ENCODE measurements at regions of chr4 and their contacts with region 1.

Region 1: DNA sequence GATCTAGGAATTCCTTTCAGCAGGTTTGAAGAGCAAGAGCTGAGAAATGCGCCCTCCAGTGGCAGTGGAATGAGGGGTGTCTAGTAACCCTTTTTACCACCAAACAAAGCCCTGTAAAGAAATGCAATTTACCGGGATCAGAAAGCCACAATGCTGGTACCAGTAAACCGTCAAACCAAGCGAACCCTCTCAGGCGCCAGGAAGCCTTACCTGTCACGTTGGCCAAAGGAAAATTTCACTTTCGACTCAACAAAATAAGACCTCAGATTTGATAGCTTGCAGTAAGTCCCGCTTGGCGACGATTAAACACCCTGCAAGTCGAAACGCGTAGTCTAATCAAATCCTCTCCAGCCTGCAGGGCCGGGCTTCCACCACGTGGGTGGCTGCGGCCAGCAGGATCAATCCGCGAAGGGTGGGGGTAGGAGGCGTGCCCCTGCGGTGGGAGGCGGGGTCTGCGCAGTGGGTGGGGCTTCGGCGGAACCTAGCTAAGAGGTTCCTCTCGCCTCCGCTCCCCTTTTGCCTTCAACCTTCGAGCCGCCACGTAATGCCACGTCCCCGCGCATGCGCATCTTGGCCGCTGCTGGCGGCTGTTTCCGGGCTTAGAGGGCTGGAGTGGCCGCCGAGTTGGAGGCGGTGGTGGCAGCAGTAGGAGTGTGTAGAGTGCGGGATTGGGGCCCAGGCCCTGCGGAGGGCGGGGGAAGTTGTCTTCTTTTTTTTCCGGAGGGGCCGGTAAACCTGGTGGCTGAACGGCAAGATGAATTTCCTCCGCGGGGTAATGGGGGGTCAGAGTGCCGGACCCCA is at the start of gene USO1:
- DNase-seq: peak; percentile 92
- H3K4me3 ChIP-seq: peak within 1 kb of the TSS; percentile 91
- H3K27me3 ChIP-seq: no peaks in the 10 kb centered on the region
- CTCF ChIP-seq: peak; percentile 79
- polyA plus RNA-seq, gene USO1: 41.3 and 90.3 TPM in 2 replicates

Region 2: GRCh38 chr4:75653845-75654503 is 70.3 kb before region 1 on chr4:
- CTCF ChIA-PET with region 1: interaction called, 16 read pairs
- POLR2A ChIA-PET with region 1: no interaction called
- DNase-seq: no peak
- H3K4me3 ChIP-seq: no peak overlapping the region
- H3K27me3 ChIP-seq: no peaks in the 10 kb centered on the region
- CTCF ChIP-seq: peak; percentile 64

Region 3: DNA sequence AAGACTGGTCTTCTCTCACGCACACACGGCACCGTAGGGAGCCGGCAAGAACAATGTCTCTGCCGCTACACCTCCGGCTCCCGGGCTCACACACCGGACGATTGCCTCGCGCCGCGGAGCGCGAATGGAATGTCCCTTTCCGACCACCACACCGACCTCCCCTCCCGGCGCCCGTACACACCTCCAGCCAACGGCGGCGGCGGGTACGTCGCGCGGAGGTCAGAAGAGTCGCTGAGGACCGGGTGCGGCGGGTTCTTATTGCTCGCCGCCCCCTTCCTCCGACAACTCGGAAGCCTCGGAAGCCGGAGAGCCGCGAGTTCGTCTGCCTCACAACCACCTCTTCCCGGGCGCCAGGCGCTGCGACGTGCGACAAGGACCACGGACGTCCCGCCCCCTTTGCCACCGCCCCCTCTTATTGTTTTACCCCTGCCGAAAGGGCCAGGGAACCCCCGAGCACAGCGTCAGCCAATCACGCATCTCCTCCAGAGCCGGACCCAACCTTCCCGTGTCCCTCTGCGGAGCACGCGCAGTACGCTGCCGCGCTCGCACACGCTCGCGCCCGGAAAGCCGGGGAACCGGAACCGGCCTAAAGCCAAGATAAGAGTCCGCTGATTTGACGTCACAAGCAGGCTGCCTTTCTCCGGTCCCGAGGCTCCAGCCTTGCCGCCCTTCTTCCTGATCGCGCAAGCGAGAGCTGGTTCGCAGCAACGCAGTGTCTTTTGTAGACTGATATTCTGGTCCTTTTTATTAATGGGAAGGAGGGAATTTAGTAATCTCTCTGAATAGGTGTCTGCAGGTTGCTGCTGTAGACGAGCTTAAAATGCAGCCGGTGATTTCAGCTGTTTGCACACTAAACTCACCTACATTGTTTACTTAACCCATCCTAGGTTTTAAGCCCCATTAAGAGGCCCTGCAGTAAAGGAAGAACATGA is 51.0 kb before region 1 on chr4 and contains the start of gene G3BP2:
- CTCF ChIA-PET with region 1: interaction called, 12 read pairs
- POLR2A ChIA-PET with region 1: no interaction called
- DNase-seq: peak; percentile 90
- H3K4me3 ChIP-seq: peak within 1 kb of the TSS; percentile 89
- H3K27me3 ChIP-seq: no peaks in the 10 kb centered on the region
- CTCF ChIP-seq: no peak
- polyA plus RNA-seq, gene G3BP2: 57.6 and 117 TPM in 2 replicates

Region 4: DNA sequence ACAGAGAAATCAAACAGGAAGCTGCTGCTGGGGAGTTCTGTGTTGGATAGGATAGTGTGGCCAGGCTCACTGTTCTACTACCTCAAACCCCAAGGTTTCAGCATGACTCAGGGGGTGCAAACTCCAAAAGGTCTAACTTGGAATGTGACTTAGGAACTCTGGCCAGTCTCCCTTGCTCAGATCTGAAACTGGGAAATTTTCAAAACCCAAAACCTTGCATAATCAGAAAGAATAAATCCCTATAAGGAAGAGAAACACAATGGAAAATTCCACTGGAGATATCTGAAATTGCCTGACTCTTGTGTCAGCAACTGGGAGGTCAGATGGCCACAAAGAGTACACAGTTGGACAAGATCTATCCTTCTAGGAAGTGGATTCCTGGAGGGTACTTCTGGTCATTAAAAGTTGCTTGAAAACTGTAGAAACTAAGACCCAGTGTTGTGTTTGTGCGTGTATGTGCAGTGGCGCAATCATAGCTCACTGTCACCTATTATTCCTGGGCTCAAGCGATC is 119.9 kb after region 1 on chr4:
- CTCF ChIA-PET with region 1: interaction called, 12 read pairs
- POLR2A ChIA-PET with region 1: no interaction called
- DNase-seq: peak; percentile 79
- H3K4me3 ChIP-seq: no peak overlapping the region
- H3K27me3 ChIP-seq: no peaks in the 10 kb centered on the region
- CTCF ChIP-seq: no peak

Measured in BJ (cell line).